MCF 10A (cell line): ENCODE measurements at regions of chr17 and their contacts with region 1.

Region 1: GRCh38 chr17:43483674-43484372 is at the start of gene DHX8:
- DNase-seq: peak; percentile 98
- H3K4me3 Mint-ChIP-seq: peak within 1 kb of the TSS; percentile 92
- H3K27ac Mint-ChIP-seq: peak within 1 kb of the TSS; percentile 96
- H3K4me1 Mint-ChIP-seq: peaks cover 8% of the 10 kb centered on the region
- H3K27me3 Mint-ChIP-seq: no peaks in the 10 kb centered on the region
- CTCF ChIP-seq: peak; percentile 100
- total RNA-seq, gene DHX8: 56.9 and 62.1 TPM in 2 replicates

Region 2: GRCh38 chr17:42642336-42642735 is 841.5 kb before region 1 on chr17:
- CTCF ChIA-PET with region 1: no interaction called
- POLR2A ChIA-PET with region 1: no interaction called
- intact Hi-C with region 1: no loop called
- DNase-seq: no peak
- H3K4me3 Mint-ChIP-seq: no peak overlapping the region
- H3K27ac Mint-ChIP-seq: no peak overlapping the region
- H3K4me1 Mint-ChIP-seq: no peaks in the 10 kb centered on the region
- H3K27me3 Mint-ChIP-seq: peaks cover 16% of the 10 kb centered on the region
- CTCF ChIP-seq: no peak

Region 3: GRCh38 chr17:43360739-43361505 is 122.9 kb before region 1 on chr17:
- CTCF ChIA-PET with region 1: interaction called, 5 read pairs
- POLR2A ChIA-PET with region 1: interaction called, 52 read pairs
- intact Hi-C with region 1: no loop called
- DNase-seq: peak; percentile 99
- H3K4me3 Mint-ChIP-seq: peak overlapping the region; percentile 79
- H3K27ac Mint-ChIP-seq: peak overlapping the region; percentile 100
- H3K4me1 Mint-ChIP-seq: peaks cover 26% of the 10 kb centered on the region
- H3K27me3 Mint-ChIP-seq: no peaks in the 10 kb centered on the region
- CTCF ChIP-seq: no peak

Region 4: DNA sequence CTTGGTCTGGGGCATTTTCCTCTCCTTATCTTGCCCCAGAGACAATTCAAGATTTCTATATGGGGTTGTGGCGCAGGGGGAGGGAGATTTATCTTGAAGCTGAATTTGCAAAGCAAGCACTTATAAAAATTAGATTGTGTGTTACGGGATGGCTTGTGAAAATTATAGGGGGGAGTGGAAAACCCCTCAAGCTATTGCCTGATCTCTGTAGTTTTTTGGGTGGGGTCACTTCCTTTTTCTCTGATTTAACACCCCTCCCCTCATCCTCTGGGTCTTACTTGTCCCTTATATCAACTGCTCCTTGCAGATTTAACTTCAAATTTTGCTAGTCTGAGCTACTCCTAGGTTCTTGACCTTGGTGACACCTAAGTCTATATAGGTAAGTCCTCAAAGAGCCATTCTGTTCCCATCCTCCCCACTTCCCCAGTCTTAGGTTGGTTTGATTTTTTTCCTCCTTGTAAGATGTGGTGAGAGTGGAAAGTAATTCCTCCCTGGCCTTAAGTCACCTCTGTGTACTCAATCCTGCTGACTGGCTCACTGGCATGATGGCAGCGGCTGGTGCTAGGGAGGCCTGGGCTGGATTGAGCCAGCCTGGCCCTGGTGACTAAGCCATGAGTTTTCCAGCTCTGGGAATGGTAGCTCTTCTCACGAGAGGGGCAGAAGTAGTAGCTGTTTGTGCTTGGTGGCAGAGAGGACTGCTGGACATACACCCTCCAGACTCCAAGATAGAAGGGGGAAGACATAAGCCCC is 82.7 kb before region 1 on chr17:
- CTCF ChIA-PET with region 1: interaction called, 374 read pairs
- POLR2A ChIA-PET with region 1: interaction called, 389 read pairs
- intact Hi-C with region 1: loop called (anchors 1 kb)
- DNase-seq: peak; percentile 86
- H3K4me3 Mint-ChIP-seq: peak overlapping the region; percentile 92
- H3K27ac Mint-ChIP-seq: peak overlapping the region; percentile 57
- H3K4me1 Mint-ChIP-seq: peaks cover 21% of the 10 kb centered on the region
- H3K27me3 Mint-ChIP-seq: no peaks in the 10 kb centered on the region
- CTCF ChIP-seq: no peak

Region 5: DNA sequence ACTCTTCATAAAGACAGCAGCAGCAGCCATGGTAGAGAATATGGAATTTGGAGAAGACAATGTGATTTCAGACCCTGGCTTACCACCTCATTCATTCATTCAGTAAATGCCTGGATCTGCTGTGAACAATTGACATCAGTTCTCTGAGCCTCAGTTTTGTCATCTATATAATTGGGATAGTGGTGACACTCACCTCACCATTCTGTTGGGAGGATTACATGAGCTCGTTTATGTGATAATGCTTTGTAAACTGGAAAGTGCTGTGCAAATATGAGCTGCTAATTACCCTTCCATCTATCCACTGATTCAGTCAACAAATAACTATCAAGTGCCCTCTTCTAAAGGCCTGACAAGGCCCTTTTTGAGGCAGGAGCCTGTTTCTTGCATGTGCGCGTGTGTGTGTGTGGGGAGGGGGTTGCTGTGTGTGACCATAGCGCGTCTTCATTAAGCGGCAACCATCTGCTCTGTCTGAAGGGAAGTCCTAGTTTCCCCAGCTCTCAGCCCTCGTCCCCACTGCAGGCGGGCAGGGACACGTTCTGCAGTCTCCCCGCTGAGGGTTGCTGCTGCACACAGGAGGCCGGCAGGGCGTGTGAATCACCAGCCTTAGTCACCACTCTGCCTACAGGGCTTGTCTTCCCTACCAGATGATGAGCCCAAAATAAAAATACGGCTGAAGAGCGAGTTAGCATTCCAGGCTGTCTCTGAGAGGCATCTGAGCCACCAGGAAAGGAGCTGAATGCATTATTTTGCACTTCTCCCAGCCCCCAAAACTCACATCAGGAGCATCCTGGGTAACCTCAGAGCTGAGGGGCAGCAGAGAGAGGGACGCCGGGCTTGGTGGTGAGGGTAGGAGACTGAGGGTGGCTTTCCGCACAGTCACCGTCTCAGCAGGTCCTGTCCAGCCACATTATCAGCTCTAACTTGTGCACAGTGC is 65.1 kb before region 1 on chr17:
- CTCF ChIA-PET with region 1: interaction called, 26 read pairs
- POLR2A ChIA-PET with region 1: interaction called, 59 read pairs
- intact Hi-C with region 1: no loop called
- DNase-seq: peak; percentile 94
- H3K4me3 Mint-ChIP-seq: peak overlapping the region; percentile 59
- H3K27ac Mint-ChIP-seq: peak overlapping the region; percentile 76
- H3K4me1 Mint-ChIP-seq: peaks cover 41% of the 10 kb centered on the region
- H3K27me3 Mint-ChIP-seq: no peaks in the 10 kb centered on the region
- CTCF ChIP-seq: no peak

Region 6: GRCh38 chr17:43449470-43450248 is 34.2 kb before region 1 on chr17:
- CTCF ChIA-PET with region 1: interaction called, 5 read pairs
- POLR2A ChIA-PET with region 1: interaction called, 19 read pairs
- intact Hi-C with region 1: no loop called
- DNase-seq: peak; percentile 82
- H3K4me3 Mint-ChIP-seq: no peak overlapping the region
- H3K27ac Mint-ChIP-seq: peak overlapping the region; percentile 68
- H3K4me1 Mint-ChIP-seq: peaks cover 17% of the 10 kb centered on the region
- H3K27me3 Mint-ChIP-seq: no peaks in the 10 kb centered on the region
- CTCF ChIP-seq: no peak

Region 7: GRCh38 chr17:43467981-43468581 is 15.7 kb before region 1 on chr17:
- CTCF ChIA-PET with region 1: interaction called, 22 read pairs
- POLR2A ChIA-PET with region 1: interaction called, 55 read pairs
- intact Hi-C with region 1: no loop called
- DNase-seq: peak; percentile 55
- H3K4me3 Mint-ChIP-seq: peak overlapping the region; percentile 9
- H3K27ac Mint-ChIP-seq: peak overlapping the region; percentile 88
- H3K4me1 Mint-ChIP-seq: peaks cover 27% of the 10 kb centered on the region
- H3K27me3 Mint-ChIP-seq: no peaks in the 10 kb centered on the region
- CTCF ChIP-seq: no peak

Region 8: GRCh38 chr17:43576563-43577229 is 92.9 kb after region 1 on chr17:
- CTCF ChIA-PET with region 1: no interaction called
- POLR2A ChIA-PET with region 1: no interaction called
- intact Hi-C with region 1: no loop called
- DNase-seq: peak; percentile 75
- H3K4me3 Mint-ChIP-seq: no peak overlapping the region
- H3K27ac Mint-ChIP-seq: no peak overlapping the region
- H3K4me1 Mint-ChIP-seq: peaks cover 17% of the 10 kb centered on the region
- H3K27me3 Mint-ChIP-seq: no peaks in the 10 kb centered on the region
- CTCF ChIP-seq: peak; percentile 96